ENCODE measurements at regions of chr5 and their contacts with region 1.

Region 1: DNA sequence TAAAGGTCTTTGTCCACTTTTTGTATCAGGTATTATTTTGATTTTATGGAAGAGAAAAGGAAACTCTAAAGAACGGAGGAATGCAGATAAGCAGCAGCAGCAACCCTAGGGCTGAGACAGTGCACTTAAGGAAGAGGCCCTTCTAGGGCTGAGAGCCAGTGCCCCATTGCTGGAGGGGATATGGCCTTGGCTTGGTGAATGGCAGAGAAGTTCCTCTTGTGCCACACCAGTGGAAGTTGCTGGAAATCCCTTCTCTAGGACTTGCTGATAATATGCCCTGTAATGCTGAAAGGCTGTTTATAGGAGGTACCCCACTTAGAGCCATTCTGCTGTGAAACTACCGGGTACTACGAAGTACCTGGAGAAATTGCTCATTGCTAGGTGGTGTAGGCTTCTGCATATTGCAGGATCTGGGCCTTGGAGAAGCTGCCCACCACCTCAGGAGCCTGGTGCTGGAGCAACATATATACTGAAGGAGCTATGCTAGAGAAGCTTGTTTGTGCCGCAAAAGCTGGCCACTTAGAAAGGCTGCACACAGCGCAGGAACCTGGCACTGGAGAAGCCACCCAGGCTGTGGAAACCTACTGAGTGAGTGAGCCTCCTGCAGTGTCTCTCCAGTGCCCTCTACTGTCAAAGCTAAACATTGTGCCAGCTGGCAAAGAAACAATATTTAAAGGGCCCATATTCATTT is 9.6 kb upstream of the UBTD2 start:
- DNase-seq: peak; percentile 67
- H3K27ac ChIP-seq: no peak overlapping the region
- CTCF ChIP-seq: peak; percentile 99

Region 2: GRCh38 chr5:172303572-172304335 is 10.6 kb after region 1 on chr5:
- CTCF ChIA-PET with region 1: interaction called, 14 read pairs
- POLR2A ChIA-PET with region 1: no interaction called
- DNase-seq: peak; percentile 67
- H3K27ac ChIP-seq: no peak overlapping the region
- CTCF ChIP-seq: no peak

Measured in RWPE1 (cell line).